ENCODE measurements at regions of chr18 and their contacts with region 1.

Region 1: DNA sequence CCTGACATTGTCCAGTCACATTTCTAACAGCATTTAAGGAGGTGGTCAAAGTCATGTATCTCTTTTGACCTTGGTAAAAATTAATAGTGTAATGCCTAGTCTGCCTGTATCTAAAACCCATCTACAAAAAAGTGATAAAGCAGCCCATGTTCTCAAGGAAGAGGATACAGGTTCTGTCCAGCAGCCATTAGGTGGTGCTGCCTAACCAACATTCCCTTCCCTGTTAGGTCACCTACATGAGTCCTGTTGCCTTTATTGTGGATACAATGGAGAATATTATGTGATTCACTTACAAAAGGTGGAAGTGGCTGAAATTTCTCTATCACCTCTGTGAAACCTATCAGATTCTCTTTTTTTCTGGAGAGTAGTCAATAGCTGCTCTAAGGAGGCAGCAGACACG is 52.5 kb downstream of the AQP4 start:
- DNase-seq: peak; percentile 67
- H3K4me3 ChIP-seq: no peak overlapping the region
- H3K27ac ChIP-seq: no peak overlapping the region
- H3K4me1 ChIP-seq: no peaks in the 10 kb centered on the region
- H3K27me3 ChIP-seq: no peaks in the 10 kb centered on the region
- CTCF ChIP-seq: peak; percentile 41 to 66

Region 2: GRCh38 chr18:26357960-26358359 is 455.1 kb before region 1 on chr18:
- CTCF ChIA-PET with region 1: no interaction called
- dilution Hi-C with region 1: no loop called
- in situ Hi-C with region 1: no loop called
- intact Hi-C with region 1: no loop called
- DNase-seq: no peak
- H3K4me3 ChIP-seq: no peak overlapping the region
- H3K27ac ChIP-seq: no peak overlapping the region
- H3K4me1 ChIP-seq: no peaks in the 10 kb centered on the region
- H3K27me3 ChIP-seq: no peaks in the 10 kb centered on the region
- CTCF ChIP-seq: no peak

Region 3: DNA sequence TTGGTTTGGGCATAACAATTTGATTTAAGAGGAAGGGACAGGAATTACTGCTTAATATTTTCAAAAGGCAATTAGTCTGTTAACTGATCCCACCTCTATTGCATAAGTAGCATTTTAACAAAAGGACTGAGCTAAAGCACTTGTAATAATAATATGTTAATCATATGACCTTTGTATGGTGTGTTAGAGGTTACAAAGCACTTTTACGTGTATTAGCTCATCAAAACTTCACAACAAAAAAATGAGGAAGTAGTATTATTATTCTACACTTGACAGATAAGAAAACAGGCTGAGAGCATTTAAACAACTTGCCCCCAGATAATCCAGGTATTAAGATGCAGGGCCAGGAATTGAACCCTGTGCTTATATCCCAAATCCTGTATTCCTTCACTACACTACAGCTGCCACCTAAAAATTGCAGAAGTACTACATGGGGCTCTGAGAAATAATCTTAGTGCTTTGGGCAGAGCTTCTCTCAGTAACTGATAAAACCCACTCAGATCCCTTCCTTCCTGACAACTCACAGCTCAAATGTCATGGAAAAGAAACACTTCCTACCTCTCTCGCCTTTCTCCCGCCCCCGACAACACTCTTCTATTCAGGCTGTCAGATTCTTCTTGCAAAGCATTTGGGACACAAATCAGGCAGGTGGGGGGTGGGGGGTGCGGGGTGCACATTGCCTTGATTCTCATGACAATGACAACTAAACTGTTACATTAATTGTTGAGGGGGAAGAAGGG is 243.9 kb before region 1 on chr18:
- CTCF ChIA-PET with region 1: no interaction called
- dilution Hi-C with region 1: no loop called
- in situ Hi-C with region 1: no loop called
- intact Hi-C with region 1: no loop called
- DNase-seq: no peak
- H3K4me3 ChIP-seq: no peak overlapping the region
- H3K27ac ChIP-seq: no peak overlapping the region
- H3K4me1 ChIP-seq: no peaks in the 10 kb centered on the region
- H3K27me3 ChIP-seq: no peaks in the 10 kb centered on the region
- CTCF ChIP-seq: no peak

Region 4: GRCh38 chr18:26963292-26963691 is 150.2 kb after region 1 on chr18:
- CTCF ChIA-PET with region 1: no interaction called
- dilution Hi-C with region 1: no loop called
- in situ Hi-C with region 1: no loop called
- intact Hi-C with region 1: loop called (anchors 1 kb)
- DNase-seq: peak; percentile 28
- H3K4me3 ChIP-seq: no peak overlapping the region
- H3K27ac ChIP-seq: no peak overlapping the region
- H3K4me1 ChIP-seq: no peaks in the 10 kb centered on the region
- H3K27me3 ChIP-seq: no peaks in the 10 kb centered on the region
- CTCF ChIP-seq: peak in 1 of 2 donors; percentile 38

Region 5: DNA sequence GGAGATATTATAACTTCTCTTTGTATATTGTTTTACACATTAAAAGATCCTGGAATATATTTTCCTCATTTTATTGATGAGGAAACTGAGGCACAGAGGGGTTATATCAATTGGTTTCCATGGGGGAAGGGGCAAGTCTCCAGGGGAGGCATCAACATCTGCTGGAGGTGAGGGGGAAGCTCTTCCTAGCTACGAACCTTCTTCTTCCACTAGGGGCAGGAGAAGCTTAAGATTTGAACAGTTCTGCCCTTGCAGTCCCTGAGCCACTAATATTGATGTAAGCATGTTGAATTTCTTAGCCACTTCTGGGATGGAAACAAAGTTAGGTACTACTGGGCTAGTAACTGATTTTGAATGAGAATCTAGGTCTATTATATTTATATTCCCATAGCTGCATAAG is 192.5 kb after region 1 on chr18:
- CTCF ChIA-PET with region 1: no interaction called
- dilution Hi-C with region 1: no loop called
- in situ Hi-C with region 1: no loop called
- intact Hi-C with region 1: loop called (anchors 1 kb)
- DNase-seq: no peak
- H3K4me3 ChIP-seq: no peak overlapping the region
- H3K27ac ChIP-seq: no peak overlapping the region
- H3K4me1 ChIP-seq: no peaks in the 10 kb centered on the region
- H3K27me3 ChIP-seq: no peaks in the 10 kb centered on the region
- CTCF ChIP-seq: peak; percentile 50 to 54

Region 6: DNA sequence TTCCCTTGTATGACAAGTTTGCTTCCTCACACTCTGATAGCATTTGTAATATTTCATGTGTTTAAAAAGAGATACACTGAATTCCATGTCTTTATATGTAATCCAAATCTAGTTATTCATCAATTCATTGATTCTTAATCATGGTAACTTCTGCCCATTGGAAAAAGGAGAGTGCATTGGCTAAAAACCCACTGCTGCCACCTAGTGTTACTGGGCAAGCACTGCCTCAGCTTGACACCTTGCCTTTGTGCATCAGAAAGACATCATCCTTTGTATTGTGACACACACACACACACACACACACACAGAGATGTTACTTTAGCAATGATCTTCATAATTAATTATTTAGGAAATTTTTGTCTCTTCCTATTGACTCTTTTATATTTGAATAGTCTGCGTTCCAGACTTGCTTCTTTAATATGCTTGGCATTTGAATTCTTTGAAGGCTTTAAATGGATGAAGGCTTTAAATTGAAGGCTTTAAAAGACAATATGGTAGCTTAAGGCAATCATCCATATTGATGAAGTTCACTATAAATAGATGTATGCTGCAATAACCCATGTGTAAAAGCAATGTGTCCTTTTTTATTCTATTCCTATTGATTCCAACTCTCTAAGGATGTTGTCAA is 786.3 kb after region 1 on chr18:
- CTCF ChIA-PET with region 1: no interaction called
- dilution Hi-C with region 1: no loop called
- in situ Hi-C with region 1: no loop called
- intact Hi-C with region 1: loop called (anchors 2 kb)
- DNase-seq: peak; percentile 41
- H3K4me3 ChIP-seq: no peak overlapping the region
- H3K27ac ChIP-seq: no peak overlapping the region
- H3K4me1 ChIP-seq: no peaks in the 10 kb centered on the region
- H3K27me3 ChIP-seq: no peaks in the 10 kb centered on the region
- CTCF ChIP-seq: peak; percentile 96 to 99

Measured in mammary epithelial cell (primary cell).